ENCODE measurements at regions of chr9 and their contacts with region 1.

Region 1: DNA sequence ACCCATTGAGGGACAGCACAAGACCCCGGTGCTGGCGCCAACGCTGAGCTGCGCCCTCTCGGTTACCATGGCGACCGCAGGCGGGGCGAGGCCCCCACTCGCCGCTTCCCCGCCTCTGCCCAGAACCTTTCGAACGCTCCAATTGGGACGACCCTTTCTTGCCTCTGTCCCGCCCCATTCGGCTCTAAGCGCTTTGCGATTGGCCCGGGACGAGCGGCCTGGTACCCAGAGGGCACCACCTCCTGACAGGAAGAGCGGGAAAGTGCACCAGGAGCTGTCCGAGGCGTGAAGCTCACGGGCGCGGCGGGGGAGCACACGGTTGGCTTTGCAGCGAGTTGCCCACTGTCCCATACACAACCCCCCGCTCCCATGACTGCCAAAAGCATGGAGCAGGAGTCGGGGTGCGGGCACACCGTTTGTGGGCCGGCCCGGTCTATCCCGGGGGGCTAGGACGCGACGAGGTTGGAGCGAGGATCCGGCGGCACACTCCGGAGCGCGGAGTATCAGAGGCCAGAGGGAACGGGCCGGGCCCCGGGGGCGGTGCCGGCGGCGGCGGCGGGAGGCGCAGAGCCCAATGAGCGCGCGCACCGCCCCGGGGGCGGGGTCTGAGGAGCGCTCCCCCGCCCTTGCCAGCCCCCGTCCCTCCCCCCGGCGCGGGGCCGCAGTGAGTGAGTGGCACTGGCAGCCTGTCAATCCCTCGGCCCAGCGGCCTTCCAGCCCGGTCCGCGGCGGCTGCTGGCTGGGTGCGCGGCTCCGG is 978 bp upstream of the PBX3 start:
- DNase-seq: peak; percentile 96
- ATAC-seq: peak; percentile 85
- H3K4me3 Mint-ChIP-seq: peak overlapping the region; percentile 82
- H3K27ac Mint-ChIP-seq: peak overlapping the region; percentile 94
- H3K4me1 Mint-ChIP-seq: peaks cover 21% of the 10 kb centered on the region
- H3K27me3 Mint-ChIP-seq: peaks cover 12% of the 10 kb centered on the region

Region 2: GRCh38 chr9:124940693-124941453 is 805.3 kb before region 1 on chr9 and contains the start of gene GOLGA1:
- CTCF ChIA-PET with region 1: no interaction called
- POLR2A ChIA-PET with region 1: no interaction called
- intact Hi-C with region 1: loop called in 1 of 2 experiments (anchors 5 kb)
- DNase-seq: peak; percentile 96
- ATAC-seq: peak; percentile 89
- H3K4me3 Mint-ChIP-seq: peak within 1 kb of the TSS; percentile 93
- H3K27ac Mint-ChIP-seq: peak within 1 kb of the TSS; percentile 99
- H3K4me1 Mint-ChIP-seq: peaks cover 20% of the 10 kb centered on the region
- H3K27me3 Mint-ChIP-seq: no peaks in the 10 kb centered on the region
- total RNA-seq, gene GOLGA1: 17.4 to 18.3 TPM

Region 3: DNA sequence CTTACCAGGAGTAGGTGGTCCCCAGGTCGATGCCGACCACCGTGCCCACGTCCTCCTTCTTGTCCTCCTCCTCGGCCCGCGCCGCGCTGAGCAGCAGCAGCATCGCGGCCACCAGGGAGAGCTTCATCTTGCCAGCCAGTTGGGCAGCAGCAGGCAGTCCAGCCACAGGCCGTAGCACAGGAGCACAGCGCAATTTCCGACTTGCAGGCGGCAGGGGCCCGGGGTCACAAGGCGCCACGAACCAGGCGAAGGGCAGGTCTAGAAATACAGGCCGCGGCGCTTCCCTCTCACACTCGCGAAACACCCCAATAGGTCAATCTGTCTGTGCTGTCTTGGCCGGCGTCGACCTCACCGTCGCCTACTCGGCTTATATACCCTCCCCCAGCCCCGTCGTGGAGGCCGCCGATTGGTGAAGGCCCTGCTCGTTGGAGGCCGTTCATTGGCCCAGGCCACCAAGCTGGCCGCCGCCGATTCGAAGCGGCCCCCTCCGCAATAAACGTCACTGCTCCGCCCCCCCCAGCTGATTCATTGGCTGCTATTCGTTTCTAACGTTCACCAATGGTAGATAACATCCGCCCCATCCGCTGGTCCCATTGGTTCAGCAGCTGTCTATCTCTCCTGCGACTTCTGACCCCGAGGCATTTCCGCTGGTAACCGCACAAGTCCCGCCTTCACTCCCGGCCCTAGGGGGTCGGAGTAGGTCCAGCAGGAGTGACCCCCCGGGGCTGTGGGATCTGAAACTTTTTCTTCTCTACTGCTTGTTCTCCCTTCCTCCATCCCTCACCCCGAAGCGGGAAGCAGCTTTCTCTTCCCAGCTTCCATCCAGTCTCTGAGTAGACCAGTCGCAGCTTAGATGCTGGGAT is 505.0 kb before region 1 on chr9 and contains the start of gene HSPA5:
- CTCF ChIA-PET with region 1: no interaction called
- POLR2A ChIA-PET with region 1: no interaction called
- intact Hi-C with region 1: loop called in 1 of 2 experiments (anchors 1 kb)
- DNase-seq: peak; percentile 100
- ATAC-seq: peak; percentile 89
- H3K4me3 Mint-ChIP-seq: peak within 1 kb of the TSS; percentile 90
- H3K27ac Mint-ChIP-seq: peak within 1 kb of the TSS; percentile 96
- H3K4me1 Mint-ChIP-seq: peaks cover 50% of the 10 kb centered on the region
- H3K27me3 Mint-ChIP-seq: no peaks in the 10 kb centered on the region
- total RNA-seq, gene HSPA5: 179 to 188 TPM

Region 4: GRCh38 chr9:125521462-125522327 is 224.5 kb before region 1 on chr9:
- CTCF ChIA-PET with region 1: no interaction called
- POLR2A ChIA-PET with region 1: no interaction called
- intact Hi-C with region 1: loop called (anchors 1 to 5 kb)
- DNase-seq: peak; percentile 63
- ATAC-seq: peak; percentile 97
- H3K4me3 Mint-ChIP-seq: peak overlapping the region; percentile 27
- H3K27ac Mint-ChIP-seq: peak overlapping the region; percentile 86
- H3K4me1 Mint-ChIP-seq: peaks cover 44% of the 10 kb centered on the region
- H3K27me3 Mint-ChIP-seq: no peaks in the 10 kb centered on the region

Region 5: DNA sequence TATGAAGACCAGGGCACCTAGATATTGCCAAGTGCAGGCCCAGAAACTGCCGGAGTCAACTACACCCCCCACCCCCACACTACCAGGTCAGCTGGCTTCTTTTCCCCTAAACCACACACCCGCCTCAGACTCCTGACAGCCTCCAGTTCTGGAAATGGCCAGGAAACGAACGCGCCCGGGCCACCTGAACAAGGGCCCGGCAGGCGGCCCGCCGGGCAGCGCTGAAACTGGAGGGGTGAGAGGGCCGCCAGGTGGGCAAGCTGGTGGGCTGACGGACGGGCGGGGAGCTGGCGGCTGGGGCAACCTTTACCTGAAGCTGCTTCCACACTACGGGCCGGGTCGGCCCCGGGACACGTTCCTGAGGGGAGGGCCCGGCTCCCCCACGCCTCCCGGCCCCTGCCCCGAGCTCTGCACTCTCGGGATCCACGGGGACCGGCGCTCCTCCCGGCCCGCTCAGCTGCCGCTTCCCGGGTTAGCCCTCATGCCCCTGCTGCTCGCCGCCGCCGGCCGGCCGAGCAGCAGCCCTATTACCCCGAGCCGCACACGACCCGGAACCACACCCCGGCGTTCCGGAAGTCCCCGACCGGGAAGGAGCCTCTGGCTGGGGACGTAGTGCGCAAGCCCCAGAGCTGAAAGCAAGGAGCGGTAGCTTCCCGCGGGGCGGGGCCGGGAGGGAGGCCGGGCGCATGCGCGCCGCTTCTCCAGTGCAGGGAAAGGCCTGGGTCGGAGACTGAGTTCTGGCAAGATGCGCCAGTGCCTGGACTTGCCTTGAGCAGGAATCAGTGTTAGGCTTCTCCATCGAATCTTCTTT is 39.3 kb before region 1 on chr9 and contains the start of gene MAPKAP1:
- CTCF ChIA-PET with region 1: no interaction called
- POLR2A ChIA-PET with region 1: interaction called, 5 read pairs
- intact Hi-C with region 1: loop called (anchors 1 kb)
- DNase-seq: peak; percentile 97
- ATAC-seq: peak; percentile 100
- H3K4me3 Mint-ChIP-seq: peak within 1 kb of the TSS; percentile 86
- H3K27ac Mint-ChIP-seq: peak within 1 kb of the TSS; percentile 83
- H3K4me1 Mint-ChIP-seq: peaks cover 44% of the 10 kb centered on the region
- H3K27me3 Mint-ChIP-seq: no peaks in the 10 kb centered on the region
- total RNA-seq, gene MAPKAP1: 51.6 to 61.9 TPM

Region 6: DNA sequence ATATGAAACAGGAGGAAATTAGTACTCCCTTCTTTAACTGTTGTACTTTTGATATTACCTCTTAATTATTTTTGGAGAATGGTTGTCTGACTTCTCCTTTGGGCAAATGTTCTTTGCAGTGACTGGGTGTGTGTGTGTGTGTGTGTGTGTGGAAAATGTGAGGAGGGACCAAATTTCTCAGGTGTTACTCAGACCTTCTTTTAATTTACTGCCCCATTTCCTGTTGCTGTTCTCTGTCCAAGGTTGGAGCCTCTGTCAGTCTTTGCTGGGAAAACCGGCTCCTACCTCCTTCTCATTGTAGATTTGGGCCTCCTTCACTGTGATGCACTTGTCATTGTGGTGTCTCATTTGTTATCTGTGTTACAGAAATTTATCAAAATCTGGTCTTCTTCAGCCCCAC is 69.4 kb after region 1 on chr9:
- CTCF ChIA-PET with region 1: no interaction called
- POLR2A ChIA-PET with region 1: no interaction called
- intact Hi-C with region 1: no loop called
- DNase-seq: peak; percentile 33
- ATAC-seq: peak; percentile 72
- H3K4me3 Mint-ChIP-seq: no peak overlapping the region
- H3K27ac Mint-ChIP-seq: no peak overlapping the region
- H3K4me1 Mint-ChIP-seq: peaks cover 7% of the 10 kb centered on the region
- H3K27me3 Mint-ChIP-seq: no peaks in the 10 kb centered on the region

Region 7: GRCh38 chr9:126514047-126514821 is 768.0 kb after region 1 on chr9:
- CTCF ChIA-PET with region 1: no interaction called
- POLR2A ChIA-PET with region 1: no interaction called
- intact Hi-C with region 1: loop called in 1 of 2 experiments (anchors 5 kb)
- DNase-seq: peak; percentile 76
- ATAC-seq: peak; percentile 50
- H3K4me3 Mint-ChIP-seq: no peak overlapping the region
- H3K27ac Mint-ChIP-seq: no peak overlapping the region
- H3K4me1 Mint-ChIP-seq: peaks cover 28% of the 10 kb centered on the region
- H3K27me3 Mint-ChIP-seq: peaks cover 66% of the 10 kb centered on the region

Measured in activated CD4-positive, alpha-beta T cell treated with anti-CD3 and anti-CD28 coated beads for 36 hours (primary cell).